ENCODE measurements at regions of chr9 and their contacts with region 1.

Region 1: DNA sequence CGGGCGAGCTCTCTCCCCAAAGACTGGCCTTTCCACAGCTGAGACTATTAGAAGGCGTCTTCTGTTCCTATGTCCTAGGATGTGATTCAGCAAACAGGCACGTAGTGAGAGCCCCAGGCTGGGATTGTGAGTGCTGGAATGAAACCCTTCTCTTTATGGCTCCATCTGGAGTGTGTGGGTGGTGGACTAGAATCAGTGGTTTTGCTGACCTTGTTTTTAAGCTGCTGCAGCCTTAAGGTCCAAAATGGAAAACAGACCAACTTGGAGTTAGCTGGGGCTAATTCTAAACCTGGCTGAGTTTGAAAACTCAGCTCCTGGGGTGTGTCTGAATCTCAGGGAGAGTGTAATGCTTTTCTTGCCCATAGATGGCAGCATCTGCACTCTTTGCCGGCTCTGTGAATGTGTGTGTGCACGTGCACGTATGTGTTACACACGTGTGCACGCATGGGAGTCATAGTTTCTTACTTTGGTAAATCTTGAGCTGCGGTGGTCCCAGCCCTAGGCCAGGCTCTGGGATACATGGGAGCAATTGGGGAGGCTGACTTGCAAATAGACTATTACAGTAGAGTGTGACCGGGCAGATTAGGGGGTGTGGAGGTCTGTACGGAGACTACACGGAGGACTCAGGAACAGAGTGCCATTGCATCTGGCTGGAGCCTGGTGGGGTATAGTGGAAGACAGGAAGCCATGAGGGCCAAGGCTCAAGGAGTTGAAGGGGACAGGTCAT is 10.7 kb downstream of the GSN start:
- DNase-seq: peak; percentile 94
- H3K4me3 Mint-ChIP-seq: peak overlapping the region; percentile 65
- H3K27ac Mint-ChIP-seq: peak overlapping the region; percentile 96
- H3K4me1 Mint-ChIP-seq: peaks cover 62% of the 10 kb centered on the region
- H3K27me3 Mint-ChIP-seq: no peaks in the 10 kb centered on the region
- CTCF ChIP-seq: peak; percentile 83

Region 2: DNA sequence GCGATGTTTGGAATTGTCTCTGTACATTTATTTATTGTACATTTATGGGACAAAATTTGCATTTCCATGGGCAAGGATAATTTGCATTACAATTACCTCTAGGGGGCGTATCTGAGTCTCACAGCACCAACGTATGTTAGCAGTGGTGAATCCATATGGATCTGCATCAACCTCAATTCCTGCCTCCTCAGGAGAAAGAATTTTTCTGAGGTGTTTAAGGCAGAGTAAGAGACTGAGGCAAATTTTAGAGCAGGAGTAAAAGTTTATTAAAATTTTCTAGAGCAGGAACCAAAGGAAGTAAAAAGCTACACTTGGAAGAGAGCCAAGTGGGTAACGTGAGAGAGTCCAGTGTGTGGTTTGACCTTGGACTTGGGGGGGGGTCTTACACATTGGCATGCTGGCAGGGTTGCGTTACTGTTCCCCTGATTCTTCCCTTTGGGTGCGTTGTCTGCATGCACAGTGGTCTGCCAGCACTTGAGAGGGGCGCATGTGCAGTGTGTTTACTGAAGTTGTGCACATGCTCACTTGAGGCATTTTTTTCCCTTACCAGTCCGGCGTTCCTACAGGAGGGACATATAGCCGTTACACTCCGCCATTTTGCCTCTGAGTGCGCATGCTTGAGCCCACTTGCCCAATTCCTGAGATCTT is 56.0 kb before region 1 on chr9:
- CTCF ChIA-PET with region 1: interaction called, 8 read pairs
- POLR2A ChIA-PET with region 1: interaction called, 3 read pairs
- intact Hi-C with region 1: loop called (anchors 1 kb)
- DNase-seq: peak; percentile 65
- H3K4me3 Mint-ChIP-seq: no peak overlapping the region
- H3K27ac Mint-ChIP-seq: no peak overlapping the region
- H3K4me1 Mint-ChIP-seq: peaks cover 7% of the 10 kb centered on the region
- H3K27me3 Mint-ChIP-seq: no peaks in the 10 kb centered on the region
- CTCF ChIP-seq: peak; percentile 59

Region 3: DNA sequence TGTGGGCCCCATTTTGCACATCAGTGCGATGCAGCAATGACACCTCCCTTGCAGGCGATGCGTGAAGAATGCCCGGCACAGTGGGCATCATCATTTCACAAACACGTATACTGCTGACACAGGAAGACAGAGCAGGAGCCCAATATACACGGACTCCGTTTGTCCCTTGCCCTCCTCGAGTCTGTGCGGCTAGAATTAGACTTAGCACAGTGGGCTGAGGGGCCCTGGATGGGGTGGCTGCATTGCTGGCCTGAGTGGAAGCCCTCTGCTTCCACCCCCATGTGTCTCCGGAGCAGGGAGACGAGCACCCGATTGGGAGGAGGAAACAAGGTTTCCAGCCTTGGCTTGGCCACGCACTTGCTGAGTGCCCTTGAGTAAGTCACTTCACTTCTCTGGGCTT is 30.1 kb after region 1 on chr9:
- CTCF ChIA-PET with region 1: interaction called, 16 read pairs
- POLR2A ChIA-PET with region 1: interaction called, 4 read pairs
- intact Hi-C with region 1: no loop called
- DNase-seq: no peak
- H3K4me3 Mint-ChIP-seq: no peak overlapping the region
- H3K27ac Mint-ChIP-seq: no peak overlapping the region
- H3K4me1 Mint-ChIP-seq: peaks cover 7% of the 10 kb centered on the region
- H3K27me3 Mint-ChIP-seq: no peaks in the 10 kb centered on the region
- CTCF ChIP-seq: no peak

Region 4: GRCh38 chr9:121340676-121341392 is 62.1 kb after region 1 on chr9:
- CTCF ChIA-PET with region 1: interaction called, 11 read pairs
- POLR2A ChIA-PET with region 1: interaction called, 11 read pairs
- intact Hi-C with region 1: no loop called
- DNase-seq: no peak
- H3K4me3 Mint-ChIP-seq: no peak overlapping the region
- H3K27ac Mint-ChIP-seq: peak overlapping the region; percentile 31
- H3K4me1 Mint-ChIP-seq: peaks cover 17% of the 10 kb centered on the region
- H3K27me3 Mint-ChIP-seq: no peaks in the 10 kb centered on the region
- CTCF ChIP-seq: no peak

Region 5: GRCh38 chr9:121362813-121363621 is 84.3 kb after region 1 on chr9:
- CTCF ChIA-PET with region 1: interaction called, 5 read pairs
- POLR2A ChIA-PET with region 1: interaction called, 11 read pairs
- intact Hi-C with region 1: no loop called
- DNase-seq: peak; percentile 47
- H3K4me3 Mint-ChIP-seq: peak overlapping the region; percentile 54
- H3K27ac Mint-ChIP-seq: peak overlapping the region; percentile 66
- H3K4me1 Mint-ChIP-seq: peaks cover 50% of the 10 kb centered on the region
- H3K27me3 Mint-ChIP-seq: no peaks in the 10 kb centered on the region
- CTCF ChIP-seq: no peak

Region 6: DNA sequence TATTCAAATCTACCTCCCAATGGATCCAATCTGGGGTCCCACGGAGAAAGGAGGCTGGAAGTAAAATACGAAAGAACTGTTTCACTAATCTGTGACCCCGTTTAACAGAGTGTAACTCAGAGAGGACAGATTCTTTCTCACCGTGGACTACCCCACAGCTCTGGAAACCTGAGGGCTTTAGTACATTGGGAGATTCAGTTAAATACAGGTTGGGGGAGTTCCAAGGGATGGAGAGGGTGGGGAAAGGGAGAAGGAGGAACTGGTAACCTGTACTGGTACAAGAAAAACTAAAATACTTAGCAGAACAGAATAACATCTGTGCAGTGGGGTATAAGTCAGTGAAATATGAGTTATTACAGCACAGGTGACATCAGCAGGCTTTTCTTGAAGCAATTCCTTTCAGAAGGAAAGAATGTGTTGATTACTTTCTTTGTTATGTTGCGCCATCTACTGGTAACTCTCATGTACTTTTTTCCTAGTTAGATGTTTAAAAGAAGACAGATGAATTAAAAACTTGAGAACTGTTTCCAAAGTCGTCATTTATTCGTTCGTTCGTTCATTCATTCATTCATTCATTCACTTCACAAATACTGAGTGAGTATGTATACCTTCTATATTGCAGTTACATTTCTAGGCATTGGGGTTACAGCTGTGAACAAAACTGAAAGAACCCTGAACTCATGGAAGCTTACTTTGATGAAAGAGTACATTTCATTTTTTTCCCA is 121.3 kb after region 1 on chr9:
- CTCF ChIA-PET with region 1: interaction called, 42 read pairs
- POLR2A ChIA-PET with region 1: interaction called, 16 read pairs
- intact Hi-C with region 1: loop called (anchors 1 kb)
- DNase-seq: peak; percentile 80
- H3K4me3 Mint-ChIP-seq: no peak overlapping the region
- H3K27ac Mint-ChIP-seq: no peak overlapping the region
- H3K4me1 Mint-ChIP-seq: peaks cover 20% of the 10 kb centered on the region
- H3K27me3 Mint-ChIP-seq: no peaks in the 10 kb centered on the region
- CTCF ChIP-seq: peak; percentile 63